ENCODE measurements at regions of chr14 and their contacts with region 1.

Region 1: DNA sequence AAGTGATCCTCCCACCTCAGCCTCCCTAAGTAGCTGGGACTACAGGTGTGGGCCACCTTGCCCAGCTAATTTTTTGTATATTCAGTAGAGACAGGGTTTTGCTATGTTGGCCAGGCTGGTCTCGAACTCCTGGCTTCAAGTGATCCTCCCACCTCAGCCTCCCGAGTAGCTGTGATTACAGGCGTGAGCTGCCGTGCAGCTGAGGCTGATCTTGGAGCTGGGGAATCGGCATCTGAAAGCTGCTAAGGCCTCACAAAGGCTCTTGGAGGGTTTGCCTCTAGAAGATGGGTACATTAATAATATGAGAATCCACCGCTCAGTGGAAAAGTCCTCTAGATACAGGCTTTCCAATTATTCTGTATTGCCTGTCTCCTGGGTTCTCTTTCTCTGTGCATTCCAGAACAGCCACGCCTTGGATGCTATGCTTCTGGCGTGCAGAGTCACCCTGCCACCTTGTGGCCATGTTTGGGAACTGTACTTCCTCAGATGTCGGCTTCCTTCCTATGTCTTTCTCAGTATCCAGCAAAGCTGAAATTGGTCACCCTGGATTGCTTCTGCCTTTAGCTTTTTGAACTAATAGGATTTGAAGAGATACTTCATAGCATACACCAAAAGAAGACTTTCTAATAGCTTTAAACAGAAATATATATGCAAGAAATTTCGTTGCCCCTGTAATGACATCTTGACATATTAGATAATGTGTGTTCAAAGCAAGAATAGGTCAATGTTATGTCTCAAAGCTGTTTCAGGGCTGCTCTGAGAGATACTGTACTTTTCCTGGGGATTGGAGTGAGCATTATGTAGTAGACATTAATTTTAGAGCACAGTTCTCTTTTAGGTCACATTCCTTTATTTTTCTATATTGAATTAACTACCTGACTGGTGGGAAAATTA is 75.4 kb downstream of the SNAPC1 start:
- DNase-seq: peak; percentile 69 to 81
- H3K4me3 ChIP-seq: no peak overlapping the region
- H3K27ac ChIP-seq: peak overlapping the region; percentile 60
- H3K4me1 ChIP-seq: peaks cover 21% of the 10 kb centered on the region
- H3K27me3 ChIP-seq: no peaks in the 10 kb centered on the region
- CTCF ChIP-seq: peak; percentile 97

Region 2: DNA sequence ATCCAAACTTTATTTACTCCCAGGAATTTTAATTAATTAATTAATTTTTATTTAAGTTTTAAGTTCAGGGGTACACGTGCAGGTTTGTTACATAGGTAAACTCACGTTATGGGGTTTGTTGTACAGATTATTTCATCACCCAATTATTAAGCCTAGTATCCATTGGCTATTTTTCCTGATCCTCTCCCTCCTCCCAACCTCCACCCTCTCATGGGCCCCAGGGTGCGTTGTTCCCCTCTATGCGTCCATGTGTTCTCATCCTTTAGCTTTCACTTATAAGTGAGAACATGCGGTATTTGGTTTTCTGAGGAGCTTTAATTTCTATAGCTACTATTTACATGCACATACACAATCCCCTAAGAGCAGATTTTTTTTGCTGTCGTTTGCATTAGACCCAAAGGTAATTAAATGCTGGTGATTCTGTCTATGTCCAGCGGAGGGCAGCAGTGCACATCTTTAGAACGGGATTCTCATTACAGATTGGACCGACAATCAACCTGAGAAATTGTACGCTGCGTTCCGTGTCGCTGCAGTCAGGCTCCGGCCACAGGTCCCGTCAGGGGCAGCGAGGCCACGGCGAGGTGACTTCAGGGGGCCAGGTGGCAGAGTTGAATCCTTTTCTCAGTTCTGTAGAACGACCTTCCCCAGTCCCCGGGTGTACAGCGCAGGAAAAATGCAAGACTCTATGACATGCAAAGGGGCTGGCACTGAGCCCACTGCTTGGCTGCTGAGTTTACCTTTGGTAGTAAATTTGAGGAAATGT is 568.1 kb before region 1 on chr14:
- CTCF ChIA-PET with region 1: interaction called, 4 read pairs
- POLR2A ChIA-PET with region 1: no interaction called
- intact Hi-C with region 1: loop called (anchors 2 kb)
- DNase-seq: peak; percentile 71 to 80
- H3K4me3 ChIP-seq: peak overlapping the region; percentile 58
- H3K27ac ChIP-seq: no peak overlapping the region
- H3K4me1 ChIP-seq: no peaks in the 10 kb centered on the region
- H3K27me3 ChIP-seq: no peaks in the 10 kb centered on the region
- CTCF ChIP-seq: peak; percentile 92

Region 3: GRCh38 chr14:61388173-61388975 is 449.2 kb before region 1 on chr14:
- CTCF ChIA-PET with region 1: no interaction called
- POLR2A ChIA-PET with region 1: no interaction called
- intact Hi-C with region 1: loop called (anchors 5 kb)
- DNase-seq: peak; percentile 73 to 98
- H3K4me3 ChIP-seq: peak overlapping the region; percentile 36; the same call in 1 of the 2 replicates
- H3K27ac ChIP-seq: peak overlapping the region; percentile 97
- H3K4me1 ChIP-seq: peaks cover 69% of the 10 kb centered on the region
- H3K27me3 ChIP-seq: no peaks in the 10 kb centered on the region
- CTCF ChIP-seq: no peak

Region 4: GRCh38 chr14:61461808-61462275 is 375.7 kb before region 1 on chr14:
- CTCF ChIA-PET with region 1: interaction called, 19 read pairs
- POLR2A ChIA-PET with region 1: no interaction called
- intact Hi-C with region 1: loop called (anchors 1 kb)
- DNase-seq: peak; percentile 48 to 70
- H3K4me3 ChIP-seq: no peak overlapping the region
- H3K27ac ChIP-seq: peak overlapping the region; percentile 66
- H3K4me1 ChIP-seq: peaks cover 56% of the 10 kb centered on the region
- H3K27me3 ChIP-seq: no peaks in the 10 kb centered on the region
- CTCF ChIP-seq: peak; percentile 93

Region 5: DNA sequence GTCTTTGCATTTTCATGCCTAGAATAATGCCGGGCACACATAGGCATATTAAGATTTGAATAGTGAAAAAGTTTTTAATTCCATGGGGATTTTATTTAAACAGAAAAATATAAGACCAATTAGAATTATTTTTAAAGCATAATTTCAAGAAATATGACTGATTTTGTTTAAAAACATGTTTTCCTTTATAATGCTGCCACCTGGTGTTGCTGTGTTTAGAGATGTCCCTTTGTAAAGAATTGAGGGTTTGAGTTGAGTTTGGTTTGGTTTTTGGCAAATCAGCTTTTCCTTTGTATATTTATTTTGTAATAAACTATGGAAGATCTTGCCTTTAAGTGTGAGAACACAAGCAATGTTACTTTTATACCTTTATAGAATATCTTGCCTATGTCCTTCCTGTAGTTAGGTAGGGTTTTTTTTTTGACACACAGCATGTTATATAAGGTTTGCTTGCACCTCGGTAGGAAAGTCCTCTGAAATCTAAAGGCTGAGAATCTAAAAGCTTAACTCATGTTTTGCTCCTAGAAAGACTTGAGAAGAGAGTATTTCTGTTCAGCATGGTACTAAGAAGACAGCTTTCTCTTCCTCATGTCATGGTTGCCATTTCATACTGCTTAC is 106.7 kb before region 1 on chr14:
- CTCF ChIA-PET with region 1: no interaction called
- POLR2A ChIA-PET with region 1: no interaction called
- intact Hi-C with region 1: no loop called
- DNase-seq: no peak
- H3K4me3 ChIP-seq: no peak overlapping the region
- H3K27ac ChIP-seq: peak overlapping the region; percentile 35
- H3K4me1 ChIP-seq: no peaks in the 10 kb centered on the region
- H3K27me3 ChIP-seq: no peaks in the 10 kb centered on the region
- CTCF ChIP-seq: peak; percentile 73

Region 6: GRCh38 chr14:61866932-61867920 is 29.6 kb after region 1 on chr14:
- CTCF ChIA-PET with region 1: no interaction called
- POLR2A ChIA-PET with region 1: no interaction called
- intact Hi-C with region 1: no loop called
- DNase-seq: peak; percentile 9 to 84
- H3K4me3 ChIP-seq: no peak overlapping the region
- H3K27ac ChIP-seq: peak overlapping the region; percentile 64
- H3K4me1 ChIP-seq: peaks cover 18% of the 10 kb centered on the region
- H3K27me3 ChIP-seq: no peaks in the 10 kb centered on the region
- CTCF ChIP-seq: no peak

Region 7: GRCh38 chr14:61889914-61890351 is 52.4 kb after region 1 on chr14:
- CTCF ChIA-PET with region 1: no interaction called
- POLR2A ChIA-PET with region 1: no interaction called
- intact Hi-C with region 1: no loop called
- DNase-seq: no peak
- H3K4me3 ChIP-seq: no peak overlapping the region
- H3K27ac ChIP-seq: no peak overlapping the region
- H3K4me1 ChIP-seq: peaks cover 12% of the 10 kb centered on the region
- H3K27me3 ChIP-seq: no peaks in the 10 kb centered on the region
- CTCF ChIP-seq: no peak

Region 8: DNA sequence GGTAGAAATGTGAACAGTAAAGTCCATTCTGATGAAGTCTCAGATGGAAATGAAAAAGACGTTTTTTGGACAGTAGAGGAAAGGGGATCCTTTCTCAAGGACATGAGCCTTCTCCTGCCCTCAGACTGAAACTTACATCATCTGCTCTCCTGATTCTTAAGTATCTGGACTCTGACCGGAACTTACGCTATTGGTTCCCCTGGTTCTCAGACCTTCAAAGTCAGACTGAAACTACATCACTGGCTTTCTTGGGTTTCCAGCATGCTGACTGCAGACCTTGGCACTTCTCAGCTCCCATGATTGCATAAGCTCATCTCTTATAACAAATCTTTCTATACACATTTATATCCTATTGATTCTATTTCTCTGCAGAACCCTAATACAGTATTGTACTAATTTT is 215.6 kb after region 1 on chr14:
- CTCF ChIA-PET with region 1: no interaction called
- POLR2A ChIA-PET with region 1: no interaction called
- intact Hi-C with region 1: no loop called
- DNase-seq: no peak
- H3K4me3 ChIP-seq: no peak overlapping the region
- H3K27ac ChIP-seq: no peak overlapping the region
- H3K4me1 ChIP-seq: no peaks in the 10 kb centered on the region
- H3K27me3 ChIP-seq: no peaks in the 10 kb centered on the region
- CTCF ChIP-seq: no peak

Region 9: DNA sequence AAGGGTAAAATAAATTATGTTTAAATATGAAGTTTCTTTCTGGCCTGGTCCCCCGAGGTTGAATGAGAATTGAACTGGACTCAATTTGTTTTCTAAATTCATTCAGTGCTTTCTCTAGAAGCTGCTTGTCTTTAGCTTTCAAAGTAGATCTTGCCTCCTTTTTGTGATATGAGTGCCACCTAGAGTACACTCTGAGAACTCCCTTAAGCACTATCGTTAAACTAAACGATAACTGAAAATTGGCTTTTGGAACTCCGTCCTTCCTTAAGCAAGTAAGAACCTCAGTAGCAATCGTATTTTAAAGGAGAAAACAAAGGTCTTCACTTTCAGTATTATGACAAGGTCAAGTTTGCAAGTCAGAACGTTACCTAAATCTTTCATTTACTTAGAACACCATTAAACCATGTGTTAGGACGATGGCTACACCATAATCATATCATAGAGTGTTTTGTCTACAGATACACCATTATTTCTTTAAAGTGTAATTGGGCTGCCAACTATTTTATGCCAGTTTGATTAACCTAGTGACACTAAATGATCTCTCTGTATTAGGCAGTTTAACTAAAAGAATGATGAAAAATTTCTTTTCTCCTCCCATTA is 289.4 kb after region 1 on chr14:
- CTCF ChIA-PET with region 1: interaction called, 7 read pairs
- POLR2A ChIA-PET with region 1: no interaction called
- intact Hi-C with region 1: loop called (anchors 2 kb)
- DNase-seq: peak in 1 of 2 experiments; percentile 61
- H3K4me3 ChIP-seq: no peak overlapping the region
- H3K27ac ChIP-seq: no peak overlapping the region
- H3K4me1 ChIP-seq: no peaks in the 10 kb centered on the region
- H3K27me3 ChIP-seq: no peaks in the 10 kb centered on the region
- CTCF ChIP-seq: peak; percentile 96

Measured in PC-9 (cell line).